ENCODE measurements at regions of chr20 and their contacts with region 1.

Region 1: GRCh38 chr20:50744143-50744792 is 12.9 kb downstream of the PARD6B start:
- DNase-seq: peak; percentile 73
- ATAC-seq: peak; percentile 91

Region 2: DNA sequence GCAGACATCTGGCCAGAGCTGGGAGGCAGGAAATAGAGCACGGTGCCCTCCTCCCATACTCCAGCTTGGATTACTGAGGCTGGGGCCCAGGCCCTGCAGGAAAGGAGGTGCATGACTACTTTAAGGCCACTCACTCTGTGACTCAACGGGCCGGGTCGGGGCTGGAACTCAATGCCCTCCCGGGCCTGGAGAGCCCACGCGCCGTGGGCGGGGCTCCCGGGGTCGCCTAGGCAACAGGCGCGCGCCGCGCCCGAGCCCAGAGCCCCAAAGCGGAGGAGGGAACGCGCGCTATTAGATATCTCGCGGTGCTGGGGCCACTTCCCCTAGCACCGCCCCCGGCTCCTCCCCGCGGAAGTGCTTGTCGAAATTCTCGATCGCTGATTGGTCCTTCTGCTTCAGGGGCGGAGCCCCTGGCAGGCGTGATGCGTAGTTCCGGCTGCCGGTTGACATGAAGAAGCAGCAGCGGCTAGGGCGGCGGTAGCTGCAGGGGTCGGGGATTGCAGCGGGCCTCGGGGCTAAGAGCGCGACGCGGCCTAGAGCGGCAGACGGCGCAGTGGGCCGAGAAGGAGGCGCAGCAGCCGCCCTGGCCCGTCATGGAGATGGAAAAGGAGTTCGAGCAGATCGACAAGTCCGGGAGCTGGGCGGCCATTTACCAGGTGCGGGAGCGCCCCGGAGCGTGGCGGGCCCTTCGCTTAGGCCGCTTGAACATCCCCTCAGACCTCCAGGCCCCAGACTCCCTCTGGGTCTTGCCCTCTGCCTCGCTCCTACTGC is 234.1 kb before region 1 on chr20 and contains the start of gene PTPN1:
- intact Hi-C with region 1: loop called (anchors 10 kb)
- DNase-seq: peak; percentile 99
- ATAC-seq: peak; percentile 99
- total RNA-seq, gene PTPN1: 23.3 TPM

Region 3: GRCh38 chr20:50625986-50626677 is 118.1 kb before region 1 on chr20:
- intact Hi-C with region 1: loop called (anchors 5 kb)
- DNase-seq: peak; percentile 79
- ATAC-seq: peak; percentile 83

Region 4: GRCh38 chr20:50663095-50663850 is 81.0 kb before region 1 on chr20:
- intact Hi-C with region 1: loop called (anchors 2 kb)
- DNase-seq: no peak
- ATAC-seq: no peak

Region 5: GRCh38 chr20:50724851-50725721 is 19.2 kb before region 1 on chr20:
- intact Hi-C with region 1: loop called (anchors 2 kb)
- DNase-seq: peak; percentile 73
- ATAC-seq: peak; percentile 70

Measured in Right ventricle myocardium inferior (tissue), 1 donor.